ENCODE measurements at regions of chr12 and their contacts with region 1.

Region 1: DNA sequence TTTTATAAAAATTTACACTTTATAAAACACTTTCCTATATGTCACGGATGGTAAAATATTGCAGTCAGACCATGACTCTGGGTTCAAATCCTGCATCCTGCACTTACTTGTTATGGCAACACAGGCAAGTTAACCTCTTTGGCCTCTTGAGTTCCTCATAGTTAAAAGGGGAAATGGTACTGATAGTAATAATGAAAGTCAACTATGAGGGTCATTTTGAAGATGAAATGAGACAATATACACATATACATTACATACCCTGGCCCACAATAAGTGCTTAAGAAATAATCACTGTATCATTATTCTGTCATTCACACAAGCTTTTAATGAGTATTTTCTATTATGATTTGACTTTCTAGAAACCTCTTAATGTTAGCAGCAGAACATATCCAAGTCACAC is 64.4 kb downstream of the C12orf42 start:
- DNase-seq: no peak
- ATAC-seq: peak; percentile 28
- H3K4me3 ChIP-seq: no peak overlapping the region
- H3K4me3 Mint-ChIP-seq: peak overlapping the region; percentile 2
- H3K27ac ChIP-seq: peak overlapping the region in 1 of 2 donors; percentile 17
- H3K27ac Mint-ChIP-seq: peak overlapping the region; percentile 43
- H3K4me1 ChIP-seq: peaks cover 6 to 8% of the 10 kb centered on the region in 2 donors
- H3K4me1 Mint-ChIP-seq: peaks cover 62% of the 10 kb centered on the region
- H3K27me3 ChIP-seq: no peaks in the 10 kb centered on the region
- H3K27me3 Mint-ChIP-seq: no peaks in the 10 kb centered on the region
- CTCF ChIP-seq: no peak

Region 2: DNA sequence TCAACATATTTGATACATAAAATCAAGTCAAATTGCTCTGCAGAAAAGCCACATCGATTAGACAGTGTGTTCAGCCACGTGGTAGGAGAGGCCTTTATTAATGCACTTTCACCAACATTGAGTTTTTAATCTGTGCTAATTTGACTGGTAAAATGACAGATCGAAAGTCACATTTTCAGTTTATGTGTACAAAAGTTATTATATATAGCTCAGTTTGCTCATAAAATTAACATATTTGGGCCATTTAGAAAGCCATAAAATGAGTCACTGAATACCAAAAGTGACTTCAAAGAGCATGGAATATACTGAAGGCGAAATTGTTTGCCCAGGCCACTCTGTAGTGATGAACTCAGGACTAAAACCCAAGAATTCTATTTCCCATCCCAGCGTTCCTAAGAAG is 38.3 kb after region 1 on chr12:
- CTCF ChIA-PET with region 1: no interaction called
- POLR2A ChIA-PET with region 1: no interaction called
- intact Hi-C with region 1: loop called (anchors 5 kb)
- DNase-seq: no peak
- ATAC-seq: no peak
- H3K4me3 ChIP-seq: no peak overlapping the region
- H3K4me3 Mint-ChIP-seq: no peak overlapping the region
- H3K27ac ChIP-seq: no peak overlapping the region
- H3K27ac Mint-ChIP-seq: no peak overlapping the region
- H3K4me1 ChIP-seq: peaks cover 6 to 8% of the 10 kb centered on the region in 2 donors
- H3K4me1 Mint-ChIP-seq: peaks cover 27% of the 10 kb centered on the region
- H3K27me3 ChIP-seq: no peaks in the 10 kb centered on the region
- H3K27me3 Mint-ChIP-seq: no peaks in the 10 kb centered on the region
- CTCF ChIP-seq: no peak

Region 3: DNA sequence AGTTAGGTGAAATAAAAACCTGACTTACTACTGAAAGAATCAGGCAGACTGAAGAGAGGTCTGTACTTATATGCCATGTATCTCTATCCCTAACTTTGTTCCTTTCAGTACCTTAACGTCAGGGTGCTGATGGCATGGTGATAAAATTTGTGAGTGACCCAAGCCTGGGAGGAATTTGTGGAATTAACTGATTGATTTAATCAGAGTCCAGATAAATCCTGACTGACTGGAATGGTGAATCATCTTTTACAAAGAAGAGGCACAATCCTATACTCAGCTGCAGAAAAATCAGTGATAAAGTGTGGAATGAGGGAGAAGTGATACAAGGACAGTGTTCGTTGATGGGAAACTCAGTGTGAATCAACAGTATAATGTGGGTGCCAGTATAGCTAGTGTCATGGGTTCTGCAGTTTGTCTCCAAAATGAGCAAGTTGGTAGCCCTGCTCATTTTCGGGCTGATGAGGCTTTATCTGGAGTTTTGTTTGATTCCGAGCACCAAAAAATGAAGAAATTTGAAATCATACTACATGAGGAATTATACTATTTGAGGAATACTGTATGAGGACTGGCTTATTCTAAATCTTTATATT is 538.1 kb after region 1 on chr12:
- CTCF ChIA-PET with region 1: no interaction called
- POLR2A ChIA-PET with region 1: no interaction called
- intact Hi-C with region 1: no loop called
- DNase-seq: no peak
- ATAC-seq: no peak
- H3K4me3 ChIP-seq: no peak overlapping the region
- H3K4me3 Mint-ChIP-seq: no peak overlapping the region
- H3K27ac ChIP-seq: no peak overlapping the region
- H3K27ac Mint-ChIP-seq: no peak overlapping the region
- H3K4me1 ChIP-seq: peaks cover 22 to 23% of the 10 kb centered on the region in 2 donors
- H3K4me1 Mint-ChIP-seq: peaks cover 47% of the 10 kb centered on the region
- H3K27me3 ChIP-seq: no peaks in the 10 kb centered on the region
- H3K27me3 Mint-ChIP-seq: no peaks in the 10 kb centered on the region
- CTCF ChIP-seq: no peak